Activated CD4-positive, alpha-beta T cell treated with anti-CD3 and anti-CD28 coated beads for 36 hours (primary cell): ENCODE measurements at regions of chr6 and their contacts with region 1.

Region 1: GRCh38 chr6:143694560-143694959 is 16.8 kb downstream of the PHACTR2 start:
- DNase-seq: peak; percentile 30
- ATAC-seq: peak; percentile 94
- H3K4me3 Mint-ChIP-seq: no peak overlapping the region
- H3K27ac Mint-ChIP-seq: peak overlapping the region; percentile 26
- H3K4me1 Mint-ChIP-seq: peaks cover 47% of the 10 kb centered on the region
- H3K27me3 Mint-ChIP-seq: no peaks in the 10 kb centered on the region

Region 2: DNA sequence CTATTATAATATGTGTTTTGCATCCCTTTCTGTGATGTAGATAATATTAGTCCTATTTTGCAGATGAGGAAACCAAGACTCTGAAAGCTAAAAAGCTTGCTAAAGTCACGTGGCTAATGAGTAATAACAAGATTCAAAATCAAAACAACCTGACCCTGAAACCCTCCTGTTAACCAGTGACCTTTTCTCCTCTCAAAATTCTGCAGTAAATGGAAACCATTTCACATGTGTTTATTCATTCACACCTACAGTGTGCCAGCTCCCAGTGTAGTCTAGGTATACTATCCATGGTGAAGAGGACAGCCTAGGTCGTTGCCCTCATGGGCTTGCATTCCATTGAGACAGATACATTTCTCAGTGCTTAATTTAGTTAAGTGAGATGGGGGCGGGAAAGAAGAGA is 47.4 kb before region 1 on chr6:
- CTCF ChIA-PET with region 1: no interaction called
- POLR2A ChIA-PET with region 1: no interaction called
- intact Hi-C with region 1: no loop called
- DNase-seq: no peak
- ATAC-seq: peak; percentile 66
- H3K4me3 Mint-ChIP-seq: no peak overlapping the region
- H3K27ac Mint-ChIP-seq: peak overlapping the region; percentile 61
- H3K4me1 Mint-ChIP-seq: peaks cover 16% of the 10 kb centered on the region
- H3K27me3 Mint-ChIP-seq: no peaks in the 10 kb centered on the region

Region 3: DNA sequence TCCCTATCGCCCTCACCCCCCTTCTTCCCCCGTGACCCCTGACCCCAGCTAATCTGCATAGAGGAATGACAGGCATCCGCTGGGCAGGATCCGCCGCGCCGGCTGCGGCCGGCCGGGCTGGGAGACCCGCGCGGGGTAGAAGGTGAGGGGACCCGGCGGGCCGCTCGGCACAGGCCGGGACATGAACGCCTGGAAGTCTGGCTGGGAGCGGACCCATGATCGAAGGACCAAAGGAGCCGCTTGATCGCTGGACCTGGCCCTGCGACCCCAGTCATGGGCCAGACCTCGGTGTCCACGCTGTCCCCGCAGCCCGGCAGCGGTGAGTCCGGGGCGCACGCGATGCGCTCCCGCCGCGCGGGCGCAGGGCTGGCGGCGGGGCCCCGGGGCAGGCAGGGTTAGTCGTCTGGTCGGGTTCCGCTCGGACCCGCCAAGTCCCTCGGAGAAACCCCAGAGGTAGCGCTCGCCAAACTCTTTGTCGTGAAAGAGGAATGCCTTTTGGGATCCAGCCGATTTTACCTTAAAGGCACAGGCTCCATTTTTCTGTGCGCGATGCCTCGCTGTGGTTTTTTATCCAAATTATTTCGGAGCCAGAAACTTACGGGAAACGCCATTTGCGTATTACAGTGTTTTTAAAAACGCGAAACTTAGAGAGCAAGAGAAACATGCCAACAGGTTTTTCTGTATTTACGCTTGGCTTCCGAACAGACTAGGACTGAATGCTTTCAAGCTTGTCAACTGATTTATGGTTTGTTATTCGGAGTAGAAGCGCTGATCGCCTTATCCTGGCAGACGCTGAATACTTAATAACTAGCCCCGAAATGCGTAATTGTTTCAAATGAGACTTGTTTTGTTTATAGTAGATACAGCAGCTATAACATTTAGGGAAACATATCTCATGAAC is 16.4 kb before region 1 on chr6 and contains the start of gene PHACTR2:
- CTCF ChIA-PET with region 1: interaction called, 3 read pairs
- POLR2A ChIA-PET with region 1: no interaction called
- intact Hi-C with region 1: loop called in 1 of 2 experiments (anchors 1 kb)
- DNase-seq: peak; percentile 80
- ATAC-seq: peak; percentile 90
- H3K4me3 Mint-ChIP-seq: peak within 1 kb of the TSS; percentile 77
- H3K27ac Mint-ChIP-seq: peak within 1 kb of the TSS; percentile 74
- H3K4me1 Mint-ChIP-seq: peaks cover 22% of the 10 kb centered on the region
- H3K27me3 Mint-ChIP-seq: peaks cover 2% of the 10 kb centered on the region
- total RNA-seq, gene PHACTR2: 21.2 to 27.0 TPM

Region 4: GRCh38 chr6:143708889-143709288 is 14.3 kb after region 1 on chr6:
- CTCF ChIA-PET with region 1: no interaction called
- POLR2A ChIA-PET with region 1: no interaction called
- intact Hi-C with region 1: no loop called
- DNase-seq: no peak
- ATAC-seq: no peak
- H3K4me3 Mint-ChIP-seq: no peak overlapping the region
- H3K27ac Mint-ChIP-seq: no peak overlapping the region
- H3K4me1 Mint-ChIP-seq: no peaks in the 10 kb centered on the region
- H3K27me3 Mint-ChIP-seq: no peaks in the 10 kb centered on the region

Region 5: DNA sequence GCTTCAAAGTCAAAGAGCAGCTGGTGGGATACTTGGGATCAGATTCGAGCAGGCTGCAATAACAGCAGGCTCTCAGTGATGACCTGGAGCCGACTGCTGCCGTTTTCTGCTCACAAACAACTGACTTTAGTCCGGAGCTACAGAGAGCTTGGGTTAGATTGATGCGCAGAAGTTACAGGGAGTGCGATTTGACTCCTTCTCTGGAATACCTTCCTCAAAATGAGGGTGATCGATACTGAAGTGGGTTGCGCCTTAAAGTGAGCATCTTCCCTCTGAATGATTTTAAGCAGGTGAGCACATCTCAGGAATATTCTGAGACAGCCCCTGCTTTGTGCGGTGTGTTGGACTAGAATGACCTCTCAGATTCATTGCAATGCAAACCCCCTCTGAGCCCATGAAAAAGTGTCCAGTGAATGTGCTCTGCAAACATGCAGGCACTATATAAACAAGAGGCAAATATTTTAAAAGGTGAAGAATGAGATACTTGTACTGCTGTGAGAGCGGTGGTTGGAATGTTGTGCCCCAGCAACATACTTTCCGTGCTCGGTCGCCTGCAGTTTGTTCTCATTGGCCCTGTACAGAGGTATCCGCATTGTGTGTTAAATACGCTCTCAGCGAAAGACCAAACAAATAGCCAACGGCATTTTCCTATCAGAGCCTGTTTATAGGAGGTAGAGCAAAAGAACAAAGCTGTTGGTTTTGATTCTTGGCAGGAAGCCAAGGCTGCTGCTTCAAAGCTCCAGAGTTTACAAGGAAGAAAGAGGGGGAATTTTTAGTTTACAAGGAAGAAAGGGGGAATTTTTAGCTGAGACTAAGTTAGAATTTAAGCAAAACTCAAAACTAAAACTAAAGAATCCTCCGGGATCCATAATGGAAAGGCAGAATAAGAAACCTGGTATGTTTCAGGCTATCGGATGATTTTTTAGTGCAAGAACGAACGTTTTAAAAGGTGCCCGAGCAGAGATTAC is 50.9 kb after region 1 on chr6:
- CTCF ChIA-PET with region 1: no interaction called
- POLR2A ChIA-PET with region 1: no interaction called
- intact Hi-C with region 1: no loop called
- DNase-seq: no peak
- ATAC-seq: no peak
- H3K4me3 Mint-ChIP-seq: no peak overlapping the region
- H3K27ac Mint-ChIP-seq: no peak overlapping the region
- H3K4me1 Mint-ChIP-seq: no peaks in the 10 kb centered on the region
- H3K27me3 Mint-ChIP-seq: no peaks in the 10 kb centered on the region